Activated T-helper 2 cell treated with anti-CD3 and anti-CD28 coated beads, Interferon-gamma antibody, Interleukin-2, Interleukin-4, amounts not matched to agents 10 μg/mL and 5 μg/mL and 100 μg/mL, durations not matched to agents 14 hours and 24 hours and 36 hours (primary cell): ENCODE measurements at regions of chr17 and their contacts with region 1.

Region 1: GRCh38 chr17:74864866-74865395 is 5.2 kb upstream of the GRIN2C start:
- DNase-seq: peak; percentile 61
- H3K4me3 Mint-ChIP-seq: no peak overlapping the region
- H3K27ac Mint-ChIP-seq: no peak overlapping the region
- H3K4me1 Mint-ChIP-seq: peaks cover 3% of the 10 kb centered on the region
- H3K27me3 Mint-ChIP-seq: peaks cover 11% of the 10 kb centered on the region

Region 2: DNA sequence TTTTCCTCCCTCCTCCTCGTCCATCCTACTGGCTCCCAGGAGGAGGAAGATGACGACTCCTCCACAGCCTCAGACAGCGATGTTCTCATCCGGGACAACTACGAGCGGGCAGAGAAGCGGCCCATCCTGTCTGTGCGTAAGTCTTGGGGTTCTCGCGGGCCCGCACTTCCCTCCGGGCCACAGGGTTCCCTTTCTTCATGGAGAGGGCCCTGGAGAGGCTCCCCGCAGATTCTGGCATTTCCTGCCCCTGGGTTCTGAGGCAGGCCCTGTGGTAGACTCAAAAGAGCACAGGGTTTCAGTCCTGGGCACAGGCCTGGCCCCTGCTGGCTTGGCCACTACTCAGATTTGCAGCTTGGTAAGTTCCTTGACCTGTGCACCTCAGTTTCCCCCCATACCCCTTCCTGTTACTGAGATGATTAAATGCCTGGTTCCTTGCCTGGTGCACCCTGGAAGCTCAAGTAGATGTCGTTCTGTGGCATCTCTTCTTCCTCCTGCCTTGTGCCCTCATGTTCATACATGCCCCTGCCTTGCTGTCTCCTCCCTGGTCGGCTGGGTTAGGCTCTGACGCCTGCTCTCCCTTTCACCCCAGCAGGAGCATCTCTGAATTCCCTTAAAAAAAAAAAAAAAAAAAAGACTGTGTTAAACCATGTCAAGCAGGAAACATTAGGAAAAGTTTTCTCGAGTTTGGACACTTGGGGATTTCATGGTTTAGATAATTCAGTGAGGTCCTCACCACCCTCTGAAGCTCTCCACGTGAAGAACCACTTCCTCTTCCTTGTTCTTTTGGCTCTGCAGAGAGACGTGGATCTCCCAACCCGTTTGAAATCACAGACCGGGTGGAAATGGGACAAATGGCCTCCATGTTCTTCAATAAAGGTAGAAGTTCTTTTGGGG is 74.5 kb before region 1 on chr17:
- intact Hi-C with region 1: loop called (anchors 1 kb)
- DNase-seq: no peak
- H3K4me3 Mint-ChIP-seq: no peak overlapping the region
- H3K27ac Mint-ChIP-seq: peak overlapping the region; percentile 53
- H3K4me1 Mint-ChIP-seq: peaks cover 22% of the 10 kb centered on the region
- H3K27me3 Mint-ChIP-seq: no peaks in the 10 kb centered on the region